Dorsolateral prefrontal cortex (tissue), 120 donors: ENCODE measurements at regions of chr5 and their contacts with region 1.

Region 1: GRCh38 chr5:107673368-107674136 is 2.8 kb upstream of the EFNA5 start:
- DNase-seq: peak; percentile 71 to 89 (median 84)
- H3K4me3 ChIP-seq: peak overlapping the region; percentile 46 to 83 (median 71)
- H3K27ac ChIP-seq: peak overlapping the region in 55 of 59 donors; percentile 11 to 94 (median 82)
- H3K27me3 ChIP-seq: peaks cover 0 to 25% (median 0%) of the 10 kb centered on the region in 45 donors
- CTCF ChIP-seq: peak; percentile 62 to 96 (median 89)

Region 2: DNA sequence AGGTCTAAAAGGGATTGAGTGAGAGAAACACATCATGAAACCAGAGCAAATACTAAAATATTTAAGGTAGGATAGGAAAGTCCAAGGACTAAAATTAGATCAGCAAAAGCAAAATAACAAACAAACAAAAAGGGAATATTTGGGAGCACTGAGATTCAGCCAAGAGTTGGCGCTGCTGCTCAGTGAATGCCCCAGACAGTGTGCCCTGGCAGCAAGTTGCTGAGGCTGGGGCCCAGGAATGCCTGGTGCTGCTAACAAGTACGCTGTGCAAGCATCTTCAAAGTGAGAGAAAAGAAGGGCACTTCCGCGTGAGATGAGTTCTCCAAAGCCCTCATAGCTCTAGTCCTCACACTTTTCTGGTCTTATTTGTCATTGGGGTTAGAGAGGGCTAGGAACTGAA is 606.2 kb before region 1 on chr5:
- intact Hi-C with region 1: loop called in 1 of 2 experiments (anchors 10 kb)
- DNase-seq: peak in 9 of 10 donors; percentile 11 to 55 (median 45)
- H3K4me3 ChIP-seq: peak overlapping the region in 19 of 59 donors; percentile 2 to 37 (median 17)
- H3K27ac ChIP-seq: peak overlapping the region in 3 of 59 donors; percentile 1 to 28 (median 9)
- H3K27me3 ChIP-seq: no peaks in the 10 kb centered on the region
- CTCF ChIP-seq: peak in 39 of 56 donors; percentile 10 to 52 (median 35)

Region 3: GRCh38 chr5:107571621-107572536 is 101.7 kb before region 1 on chr5:
- intact Hi-C with region 1: loop called in 1 of 2 experiments (anchors 10 kb)
- DNase-seq: peak; percentile 83 to 96 (median 92)
- H3K4me3 ChIP-seq: peak overlapping the region; percentile 32 to 77 (median 58)
- H3K27ac ChIP-seq: peak overlapping the region in 38 of 59 donors; percentile 9 to 75 (median 56)
- H3K27me3 ChIP-seq: peaks cover 0 to 2% (median 0%) of the 10 kb centered on the region in 45 donors
- CTCF ChIP-seq: peak; percentile 87 to 98 (median 94)

Region 4: DNA sequence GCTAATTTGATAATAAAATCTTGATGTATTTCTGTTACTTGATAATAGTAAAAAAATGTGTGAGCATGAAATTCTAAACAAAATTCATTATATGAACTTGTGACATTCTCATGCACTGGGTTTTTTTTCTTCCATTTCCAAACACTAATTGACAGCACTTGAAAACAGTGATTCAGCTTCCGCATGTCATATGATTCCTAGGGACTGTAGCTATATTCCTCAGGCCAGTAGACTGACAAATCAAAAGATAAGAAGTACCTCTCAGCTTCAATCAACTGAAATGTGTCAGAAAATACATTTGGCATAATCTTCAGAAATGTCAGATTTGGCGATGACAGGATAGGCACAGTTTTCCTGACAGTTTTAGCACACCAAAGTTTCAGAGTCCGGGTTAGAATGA is 55.3 kb before region 1 on chr5:
- intact Hi-C with region 1: no loop called
- DNase-seq: no peak
- H3K4me3 ChIP-seq: no peak overlapping the region
- H3K27ac ChIP-seq: peak overlapping the region in 2 of 59 donors; percentile 10 to 21
- H3K27me3 ChIP-seq: no peaks in the 10 kb centered on the region
- CTCF ChIP-seq: no peak